ENCODE measurements at regions of chr6 and their contacts with region 1.

Region 1: GRCh38 chr6:52881996-52882841 is 27.3 kb downstream of the GSTA3 start:
- DNase-seq: peak in 6 of 10 donors; percentile 19 to 88 (median 59)

Region 2: GRCh38 chr6:52953911-52954839 is 72.0 kb after region 1 on chr6:
- intact Hi-C with region 1: no loop called
- DNase-seq: no peak

Region 3: DNA sequence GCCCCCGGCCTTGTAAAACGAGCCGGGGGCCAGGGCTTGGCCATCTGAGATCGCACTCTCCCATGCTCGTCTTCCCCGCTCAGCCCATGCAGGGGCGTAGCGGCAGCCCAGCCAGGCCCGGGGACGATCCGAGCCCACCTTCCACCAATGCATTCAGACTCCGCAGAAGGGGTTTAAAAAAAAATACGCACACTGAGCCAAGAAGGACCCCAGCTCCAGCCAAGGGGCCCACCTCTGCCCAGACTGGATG is 112.5 kb after region 1 on chr6:
- intact Hi-C with region 1: loop called (anchors 5 kb)
- DNase-seq: peak; percentile 32 to 91 (median 46)

Measured in posterior cingulate gyrus (tissue), 11 donors.